GM13977 (cell line): ENCODE measurements at regions of chr9 and their contacts with region 1.

Region 1: GRCh38 chr9:134163353-134164196 is 789 bp downstream of the RNU6ATAC start:
- DNase-seq: peak; percentile 69
- CTCF ChIP-seq: peak; percentile 5

Region 2: DNA sequence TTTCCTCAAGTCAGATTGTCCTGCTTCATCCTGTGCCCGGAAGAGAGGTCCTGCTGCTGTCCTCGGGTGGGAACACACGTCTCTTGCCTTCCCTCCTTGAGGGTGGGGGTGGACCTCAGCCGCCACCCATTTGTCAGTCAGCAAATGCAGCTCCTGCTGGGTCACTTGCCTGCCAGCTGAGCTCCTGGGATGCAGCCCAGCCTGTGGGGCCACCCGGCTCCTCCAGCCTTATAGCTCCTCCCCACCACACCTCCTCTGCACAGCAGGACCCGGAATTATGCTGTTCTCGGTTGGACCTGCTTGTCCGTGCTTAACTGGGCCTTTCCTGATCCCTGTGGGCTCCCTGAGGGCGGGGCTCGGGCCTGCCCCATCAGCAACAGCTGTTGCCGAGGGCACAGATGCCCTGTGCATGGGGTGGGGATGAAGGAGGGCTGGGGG is 215.3 kb after region 1 on chr9:
- in situ Hi-C with region 1: loop called (anchors 10 kb)
- DNase-seq: no peak
- CTCF ChIP-seq: no peak

Region 3: DNA sequence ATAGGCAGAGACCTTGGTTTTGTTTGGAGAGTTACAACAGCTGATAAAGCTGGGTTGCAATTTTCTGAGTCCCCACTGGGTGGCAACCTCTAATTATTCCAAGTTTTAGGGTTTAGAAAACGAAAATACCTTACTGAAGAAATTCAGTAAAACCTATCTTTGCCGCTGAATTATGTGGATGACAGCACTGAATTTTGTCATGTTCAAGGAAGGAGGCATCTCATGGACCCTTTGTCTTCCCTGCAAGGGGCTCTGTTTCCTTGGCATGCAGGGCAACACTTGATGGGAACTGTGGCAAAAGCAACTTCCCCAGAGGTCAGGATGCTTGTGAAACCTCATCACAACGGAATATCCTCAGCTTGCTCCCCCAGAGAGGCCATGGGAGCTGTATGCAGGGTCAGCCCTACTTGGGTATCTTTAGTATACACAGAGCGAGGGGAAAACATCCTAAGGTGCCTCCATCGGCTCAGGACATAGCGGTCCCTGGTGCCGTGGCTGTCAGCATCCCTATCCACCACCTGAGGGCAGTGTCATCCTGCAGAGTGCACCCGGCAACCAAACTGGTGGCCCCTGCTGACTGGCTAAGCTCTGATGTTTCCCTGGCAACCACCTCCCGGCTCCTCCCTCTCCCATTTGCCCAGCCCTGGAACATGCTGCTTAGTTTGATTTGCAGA is 285.8 kb after region 1 on chr9:
- in situ Hi-C with region 1: loop called (anchors 10 kb)
- DNase-seq: peak; percentile 95
- CTCF ChIP-seq: peak; percentile 90